H1 (cell line): ENCODE measurements at regions of chr11 and their contacts with region 1.

Region 1: DNA sequence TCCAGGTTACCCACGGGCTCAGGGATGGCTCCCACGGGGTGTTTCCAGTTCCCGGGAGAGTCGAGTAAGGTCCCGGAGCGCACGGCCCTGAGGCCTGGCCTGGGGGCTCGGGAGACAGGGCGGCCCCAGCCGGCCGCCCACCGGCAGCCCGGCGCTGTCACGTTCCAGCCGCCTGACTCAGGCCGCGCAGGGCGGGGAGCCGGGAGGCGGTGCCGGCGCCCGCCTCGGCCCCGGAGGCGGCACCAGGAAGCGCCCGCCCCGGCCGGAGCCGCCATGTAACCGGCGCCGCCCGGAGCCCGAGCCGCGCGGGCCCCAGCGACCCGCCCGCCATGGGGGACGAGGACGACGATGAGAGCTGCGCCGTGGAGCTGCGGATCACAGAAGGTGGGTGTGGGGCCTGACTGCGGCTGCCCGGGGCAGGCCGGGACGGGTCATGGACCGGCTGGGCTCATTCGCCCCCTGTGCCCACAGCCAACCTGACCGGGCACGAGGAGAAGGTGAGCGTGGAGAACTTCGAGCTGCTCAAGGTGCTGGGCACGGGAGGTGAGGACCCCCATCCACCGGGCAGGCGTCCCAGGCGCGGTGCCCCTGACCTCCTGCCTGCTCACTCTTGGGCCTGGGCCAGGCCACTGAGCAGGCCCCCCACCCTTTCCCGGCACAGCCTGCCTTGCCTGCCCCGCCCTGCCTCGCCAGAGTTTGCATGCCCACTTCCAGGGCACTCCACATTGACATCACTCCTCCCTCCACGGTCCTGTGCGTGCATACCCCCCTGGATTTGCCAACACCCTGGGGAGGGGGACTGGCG is at the start of gene RPS6KA4:
- DNase-seq: peak in 1 of 2 experiments; percentile 75
- H3K4me3 ChIP-seq: peak within 1 kb of the TSS; percentile 61 to 83 (median 72)
- H3K27ac ChIP-seq: no peak within 1 kb of the TSS; the same call in 1 of the 2 replicates
- H3K4me1 ChIP-seq: peaks cover 0 to 39% (median 30%) of the 10 kb centered on the region in 4 experiments; a peak in 6 of 7 replicates
- H3K27me3 ChIP-seq: no peaks in the 10 kb centered on the region
- CTCF ChIP-seq: no peak
- EP300 ChIP-seq: no peak
- POLR2A ChIP-seq: no peak
- RAD21 ChIP-seq: no peak
- total RNA-seq, gene RPS6KA4: 12.6 and 13.2 TPM in 2 replicates

Region 2: DNA sequence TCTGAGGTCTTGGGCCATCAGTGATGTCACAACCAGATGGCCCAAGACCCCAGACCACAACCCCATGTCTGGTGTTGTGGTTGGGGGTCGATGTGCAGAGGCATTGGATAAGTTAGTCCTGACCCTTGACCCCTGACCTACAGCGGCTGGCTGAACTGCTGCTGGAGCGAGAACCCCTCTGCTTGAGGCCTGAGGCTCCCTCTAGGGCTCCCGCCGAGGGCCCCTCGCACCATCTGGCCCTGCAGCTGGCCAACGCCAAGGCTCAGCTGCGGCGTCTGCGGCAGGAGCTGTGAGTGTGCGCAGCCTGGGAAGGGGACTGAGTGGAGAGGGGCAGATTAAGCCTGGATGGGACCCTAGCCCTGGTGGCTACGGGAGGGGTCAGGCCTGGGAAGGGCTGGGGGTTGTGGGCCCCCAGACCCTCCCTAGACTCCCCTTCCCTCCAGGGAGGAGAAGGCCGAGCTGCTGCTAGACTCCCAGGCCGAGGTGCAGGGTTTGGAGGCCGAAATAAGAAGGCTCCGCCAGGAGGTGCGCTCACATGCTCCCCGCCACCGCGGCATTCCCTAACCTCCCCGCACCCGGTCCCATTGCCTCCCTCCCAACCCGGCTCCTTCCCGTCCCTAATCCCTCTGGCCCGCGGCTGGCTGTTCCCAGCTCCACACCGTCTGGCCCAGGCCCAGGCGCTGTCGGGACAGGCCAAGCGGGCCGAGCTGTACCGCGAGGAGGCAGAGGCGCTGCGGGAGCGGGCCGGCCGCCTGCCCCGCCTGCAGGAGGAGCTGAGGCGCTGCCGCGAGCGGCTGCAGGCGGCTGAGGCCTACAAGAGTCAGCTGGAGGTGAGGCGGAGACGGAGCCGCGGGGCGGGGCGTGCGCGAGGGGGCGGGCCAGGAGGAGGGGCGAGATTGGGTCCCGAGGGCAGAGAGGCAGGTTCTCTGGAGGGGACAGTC is 17.0 kb before region 1 on chr11:
- CTCF ChIA-PET with region 1: interaction called, 409 read pairs
- POLR2A ChIA-PET with region 1: interaction called, 11 read pairs
- DNase-seq: peak; percentile 86 to 99
- H3K4me3 ChIP-seq: peak overlapping the region; percentile 25 to 69 (median 34); a peak in 7 of 8 replicates
- H3K27ac ChIP-seq: no peak overlapping the region
- H3K4me1 ChIP-seq: peaks cover 0 to 23% (median 17%) of the 10 kb centered on the region in 4 experiments; a peak in 6 of 7 replicates
- H3K27me3 ChIP-seq: peaks cover 0 to 2% (median 0%) of the 10 kb centered on the region in 4 experiments; a peak in 1 of 7 replicates
- CTCF ChIP-seq: peak in 2 of 3 experiments; percentile 38 to 60; a peak in 3 of 4 replicates
- EP300 ChIP-seq: no peak
- POLR2A ChIP-seq: peak in 1 of 2 experiments; percentile 57; a peak in 2 of 3 replicates
- RAD21 ChIP-seq: peak; percentile 18 to 45; a peak in 3 of 4 replicates

Region 3: GRCh38 chr11:64386306-64386702 is 27.2 kb after region 1 on chr11:
- CTCF ChIA-PET with region 1: interaction called, 16 read pairs
- POLR2A ChIA-PET with region 1: no interaction called
- DNase-seq: no peak
- H3K4me3 ChIP-seq: no peak overlapping the region
- H3K27ac ChIP-seq: no peak overlapping the region
- H3K4me1 ChIP-seq: peaks cover 0 to 2% (median 0%) of the 10 kb centered on the region in 4 experiments; a peak in 4 of 7 replicates
- H3K27me3 ChIP-seq: peaks cover 0 to 2% (median 0%) of the 10 kb centered on the region in 4 experiments; a peak in 1 of 7 replicates
- CTCF ChIP-seq: no peak
- EP300 ChIP-seq: no peak
- POLR2A ChIP-seq: no peak
- RAD21 ChIP-seq: no peak

Region 4: GRCh38 chr11:64419818-64420485 is 60.8 kb after region 1 on chr11:
- CTCF ChIA-PET with region 1: interaction called, 10 read pairs
- POLR2A ChIA-PET with region 1: no interaction called
- DNase-seq: no peak
- H3K4me3 ChIP-seq: no peak overlapping the region
- H3K27ac ChIP-seq: no peak overlapping the region
- H3K4me1 ChIP-seq: peaks cover 1 to 4% (median 2%) of the 10 kb centered on the region in 4 experiments; a peak in 5 of 7 replicates
- H3K27me3 ChIP-seq: peaks cover 0 to 3% (median under 1%) of the 10 kb centered on the region in 4 experiments; a peak in 3 of 7 replicates
- CTCF ChIP-seq: no peak
- EP300 ChIP-seq: no peak
- POLR2A ChIP-seq: no peak
- RAD21 ChIP-seq: no peak